ENCODE measurements at regions of chr15 and their contacts with region 1.

Region 1: DNA sequence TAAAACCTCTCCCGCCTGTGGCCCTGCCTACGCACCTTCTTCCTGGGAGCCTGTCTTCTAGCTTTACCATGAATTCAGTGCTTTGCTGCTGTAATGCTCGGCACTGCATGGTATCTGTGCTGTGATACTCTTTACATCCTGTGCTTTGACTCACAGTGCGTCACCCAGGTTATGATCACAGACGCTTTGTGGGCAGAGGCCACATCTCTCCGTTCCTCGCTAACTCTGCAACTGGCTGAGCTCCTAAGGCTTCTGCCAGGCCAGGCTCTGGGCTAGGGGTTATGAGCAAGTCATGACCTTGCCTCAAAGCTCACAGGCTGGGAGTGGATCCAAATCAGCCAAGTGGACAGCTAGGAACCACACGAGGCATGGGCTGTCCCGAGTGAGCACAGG is 23.2 kb downstream of the SPTBN5 start:
- DNase-seq: peak in 1 of 2 experiments; percentile 37
- H3K4me3 ChIP-seq: no peak overlapping the region
- H3K27ac ChIP-seq: no peak overlapping the region
- H3K4me1 ChIP-seq: no peaks in the 10 kb centered on the region
- H3K27me3 ChIP-seq: no peaks in the 10 kb centered on the region
- CTCF ChIP-seq: no peak

Region 2: DNA sequence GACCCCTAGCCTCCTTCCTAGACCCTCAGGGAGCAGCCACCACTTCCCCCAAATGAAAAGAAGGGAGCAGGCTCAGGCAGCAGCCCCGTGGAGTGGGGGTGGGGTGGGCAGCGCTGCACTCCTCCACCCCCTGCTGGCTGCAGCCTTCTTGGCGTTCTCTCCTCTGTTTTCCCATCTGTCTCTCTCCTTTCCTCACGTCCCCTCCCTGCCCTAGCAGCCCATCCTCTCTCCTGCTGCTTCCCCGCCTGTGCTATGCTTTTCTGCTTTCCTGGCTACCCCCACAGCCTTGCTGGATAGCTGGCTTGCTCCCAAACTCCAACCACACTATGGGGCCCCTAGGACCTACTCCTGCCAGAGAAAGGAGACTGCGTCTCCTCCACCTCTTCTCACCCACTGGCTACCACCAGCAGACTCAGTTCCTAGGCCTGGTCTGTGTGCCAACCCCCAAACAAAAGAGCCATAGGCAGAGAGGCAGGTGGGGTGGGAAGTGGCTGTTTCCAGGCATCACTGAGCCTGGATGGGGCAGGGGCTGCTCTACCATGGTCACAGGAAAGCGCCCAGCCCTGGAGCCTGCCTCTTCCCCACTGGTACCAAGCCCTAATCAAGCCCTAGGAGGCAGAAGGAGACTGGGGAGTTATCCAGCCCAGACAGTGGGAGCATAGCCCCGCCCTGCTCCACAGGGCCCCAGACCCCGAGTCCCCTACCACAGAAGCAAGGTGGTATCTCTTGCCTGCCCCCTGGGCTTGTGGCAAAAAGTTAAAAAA is 1516.1 kb before region 1 on chr15:
- CTCF ChIA-PET with region 1: no interaction called
- POLR2A ChIA-PET with region 1: no interaction called
- intact Hi-C with region 1: no loop called
- DNase-seq: no peak
- H3K4me3 ChIP-seq: no peak overlapping the region
- H3K27ac ChIP-seq: no peak overlapping the region
- H3K4me1 ChIP-seq: peaks cover 7% of the 10 kb centered on the region; the same call in 1 of the 2 replicates
- H3K27me3 ChIP-seq: no peaks in the 10 kb centered on the region
- CTCF ChIP-seq: peak; percentile 27; the same call in 1 of the 2 replicates

Region 3: DNA sequence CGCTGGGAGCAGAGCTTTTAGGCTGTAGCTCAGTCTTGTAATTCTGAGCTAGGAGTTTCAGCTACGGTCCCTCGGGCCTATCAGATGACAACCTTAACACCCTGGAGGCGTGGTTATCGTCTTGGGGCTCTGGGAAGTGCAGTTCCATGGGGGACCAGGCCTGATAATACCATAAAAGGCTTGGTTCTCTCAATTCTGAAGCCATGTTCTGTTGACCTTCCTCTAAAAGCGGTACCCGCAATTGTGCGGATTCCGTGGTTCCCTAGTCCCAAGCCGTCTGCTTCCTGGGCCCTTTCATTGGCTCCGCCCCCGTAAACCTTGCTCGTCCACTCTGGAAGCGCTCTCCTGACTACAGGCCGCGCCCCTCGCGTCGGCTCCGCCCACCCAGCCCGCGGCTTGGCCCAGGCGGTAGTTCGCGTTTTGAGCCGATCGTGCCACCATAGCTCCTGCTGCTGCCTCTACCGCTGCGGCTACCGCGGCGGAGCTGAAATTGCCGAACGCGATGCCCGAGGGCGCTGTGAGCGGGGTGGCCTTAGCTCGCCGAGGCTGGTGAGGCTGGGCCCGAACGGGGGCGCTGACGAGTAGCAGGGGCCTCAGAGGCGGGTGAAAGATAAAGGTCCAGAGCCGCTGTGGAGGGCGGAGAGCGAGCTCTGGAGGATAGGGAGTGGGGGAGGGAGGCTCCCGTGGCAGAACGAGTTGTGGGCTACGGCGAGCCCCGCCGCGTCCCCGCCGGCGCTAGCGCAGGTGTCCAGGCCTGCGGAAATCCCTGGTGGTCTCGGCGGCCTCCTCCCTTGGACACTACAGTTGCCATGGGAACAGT is 96.4 kb before region 1 on chr15 and contains the start of gene MAPKBP1:
- CTCF ChIA-PET with region 1: no interaction called
- POLR2A ChIA-PET with region 1: no interaction called
- intact Hi-C with region 1: no loop called
- DNase-seq: peak; percentile 86 to 98
- H3K4me3 ChIP-seq: peak within 1 kb of the TSS; percentile 80
- H3K27ac ChIP-seq: peak within 1 kb of the TSS; percentile 64
- H3K4me1 ChIP-seq: peaks cover 24% of the 10 kb centered on the region
- H3K27me3 ChIP-seq: no peaks in the 10 kb centered on the region
- CTCF ChIP-seq: peak; percentile 63
- total RNA-seq, gene MAPKBP1: 17.6 and 22.9 TPM in 2 replicates

Region 4: GRCh38 chr15:41957021-41957897 is 86.6 kb after region 1 on chr15:
- CTCF ChIA-PET with region 1: no interaction called
- POLR2A ChIA-PET with region 1: interaction called, 18 read pairs
- intact Hi-C with region 1: no loop called
- DNase-seq: no peak
- H3K4me3 ChIP-seq: no peak overlapping the region
- H3K27ac ChIP-seq: no peak overlapping the region
- H3K4me1 ChIP-seq: peaks cover 9% of the 10 kb centered on the region
- H3K27me3 ChIP-seq: no peaks in the 10 kb centered on the region
- CTCF ChIP-seq: no peak